Activated naive CD4-positive, alpha-beta T cell treated with anti-CD3 and anti-CD28 coated beads for 36 hours (primary cell): ENCODE measurements at regions of chr7 and their contacts with region 1.

Region 1: GRCh38 chr7:21939136-21939857 is 6.4 kb downstream of the CDCA7L start:
- DNase-seq: peak; percentile 84
- H3K4me3 Mint-ChIP-seq: peak overlapping the region; percentile 13
- H3K27ac Mint-ChIP-seq: peak overlapping the region; percentile 77
- H3K4me1 Mint-ChIP-seq: peaks cover 72% of the 10 kb centered on the region
- H3K27me3 Mint-ChIP-seq: no peaks in the 10 kb centered on the region

Region 2: GRCh38 chr7:21338728-21339164 is 600.6 kb before region 1 on chr7:
- CTCF ChIA-PET with region 1: no interaction called
- intact Hi-C with region 1: loop called (anchors 1 kb)
- DNase-seq: peak; percentile 80
- H3K4me3 Mint-ChIP-seq: peak overlapping the region; percentile 1
- H3K27ac Mint-ChIP-seq: peak overlapping the region; percentile 94
- H3K4me1 Mint-ChIP-seq: peaks cover 20% of the 10 kb centered on the region
- H3K27me3 Mint-ChIP-seq: no peaks in the 10 kb centered on the region

Region 3: DNA sequence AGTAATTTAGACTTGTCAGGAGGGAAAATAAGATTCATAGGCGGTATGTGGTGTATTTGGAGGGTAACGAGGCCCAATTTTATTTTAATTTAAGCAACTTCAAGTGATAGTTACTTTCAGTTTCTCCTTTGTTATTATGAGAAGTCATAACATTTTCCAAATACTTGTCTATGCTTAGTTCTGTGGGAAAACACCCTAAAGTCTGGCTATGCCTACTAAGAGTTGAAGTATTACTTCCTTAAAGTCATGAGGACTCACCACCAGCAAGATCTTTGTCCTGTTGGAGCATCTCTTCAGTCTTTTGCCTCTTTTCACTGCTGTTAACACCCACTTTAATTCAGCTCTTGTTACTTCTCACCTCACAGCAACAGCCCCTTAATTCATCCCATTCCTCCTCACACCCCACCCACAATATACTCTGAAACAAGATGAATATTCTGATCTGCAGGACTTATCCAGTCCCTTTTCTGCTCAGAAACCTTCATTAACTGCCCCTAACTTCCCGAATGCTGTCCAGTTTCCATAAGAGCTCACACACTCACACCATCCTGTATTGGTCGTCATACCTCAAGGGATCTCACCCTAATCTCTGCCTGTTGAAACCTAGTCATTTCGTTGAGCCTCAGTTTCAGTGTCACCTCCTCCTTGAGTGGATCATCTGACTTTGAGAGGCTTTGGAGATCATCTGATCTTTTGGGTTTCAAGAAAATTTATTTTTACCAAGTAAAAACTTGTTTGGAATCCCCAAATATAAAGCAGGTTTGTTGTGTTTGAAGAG is 335.1 kb before region 1 on chr7:
- CTCF ChIA-PET with region 1: interaction called, 3 read pairs
- intact Hi-C with region 1: loop called (anchors 1 kb)
- DNase-seq: no peak
- H3K4me3 Mint-ChIP-seq: no peak overlapping the region
- H3K27ac Mint-ChIP-seq: peak overlapping the region; percentile 60
- H3K4me1 Mint-ChIP-seq: peaks cover 17% of the 10 kb centered on the region
- H3K27me3 Mint-ChIP-seq: peaks cover 2% of the 10 kb centered on the region

Region 4: DNA sequence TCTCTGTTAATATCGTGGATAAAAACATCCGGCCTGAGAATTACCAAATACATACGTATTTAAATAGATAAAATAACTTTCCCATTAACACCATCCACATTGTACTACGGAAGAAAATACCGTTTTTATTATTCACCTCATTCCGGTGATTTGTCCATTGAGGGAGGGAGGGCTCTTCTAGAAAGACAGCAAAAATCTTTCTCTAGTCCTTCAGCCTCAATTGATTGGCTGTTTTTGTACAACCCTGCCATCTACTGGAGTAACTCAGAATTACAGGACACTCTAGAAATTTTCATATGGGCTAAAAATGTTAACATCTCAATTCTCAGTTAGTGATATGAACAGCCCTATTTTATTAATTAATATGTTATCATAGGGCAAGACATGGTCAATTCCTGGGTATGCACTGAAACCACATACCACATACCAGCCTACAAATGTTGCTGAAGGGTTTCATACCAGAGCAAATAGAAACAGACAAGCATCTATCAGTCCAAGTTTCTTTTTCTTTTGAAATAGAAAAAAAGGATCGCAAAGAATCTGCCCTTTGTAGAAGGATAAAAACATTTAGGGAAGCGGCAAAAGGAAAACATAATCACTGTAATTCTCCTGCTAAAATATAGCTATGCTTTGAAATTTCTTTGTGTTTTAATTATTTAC is 62.2 kb after region 1 on chr7:
- CTCF ChIA-PET with region 1: no interaction called
- intact Hi-C with region 1: loop called (anchors 2 kb)
- DNase-seq: peak; percentile 24
- H3K4me3 Mint-ChIP-seq: no peak overlapping the region
- H3K27ac Mint-ChIP-seq: no peak overlapping the region
- H3K4me1 Mint-ChIP-seq: peaks cover 3% of the 10 kb centered on the region
- H3K27me3 Mint-ChIP-seq: no peaks in the 10 kb centered on the region

Region 5: GRCh38 chr7:22697876-22698606 is 758.7 kb after region 1 on chr7:
- CTCF ChIA-PET with region 1: no interaction called
- intact Hi-C with region 1: loop called (anchors 1 kb)
- DNase-seq: peak; percentile 59
- H3K4me3 Mint-ChIP-seq: no peak overlapping the region
- H3K27ac Mint-ChIP-seq: peak overlapping the region; percentile 84
- H3K4me1 Mint-ChIP-seq: peaks cover 67% of the 10 kb centered on the region
- H3K27me3 Mint-ChIP-seq: no peaks in the 10 kb centered on the region

Region 6: GRCh38 chr7:22969010-22969431 is 1029.7 kb after region 1 on chr7:
- CTCF ChIA-PET with region 1: no interaction called
- intact Hi-C with region 1: no loop called
- DNase-seq: no peak
- H3K4me3 Mint-ChIP-seq: no peak overlapping the region
- H3K27ac Mint-ChIP-seq: no peak overlapping the region
- H3K4me1 Mint-ChIP-seq: no peaks in the 10 kb centered on the region
- H3K27me3 Mint-ChIP-seq: no peaks in the 10 kb centered on the region